CD4-positive, alpha-beta T cell (primary cell): ENCODE measurements at regions of chr7 and their contacts with region 1.

Region 1: GRCh38 chr7:85940798-85941197 is 702.9 kb upstream of the GRM3 start:
- DNase-seq: no peak
- ATAC-seq: no peak
- H3K4me3 ChIP-seq: no peak overlapping the region
- H3K4me3 Mint-ChIP-seq: no peak overlapping the region
- H3K27ac ChIP-seq: no peak overlapping the region
- H3K27ac Mint-ChIP-seq: no peak overlapping the region
- H3K4me1 ChIP-seq: no peaks in the 10 kb centered on the region
- H3K4me1 Mint-ChIP-seq: no peaks in the 10 kb centered on the region
- H3K27me3 ChIP-seq: no peaks in the 10 kb centered on the region
- H3K27me3 Mint-ChIP-seq: no peaks in the 10 kb centered on the region
- CTCF ChIP-seq: no peak

Region 2: DNA sequence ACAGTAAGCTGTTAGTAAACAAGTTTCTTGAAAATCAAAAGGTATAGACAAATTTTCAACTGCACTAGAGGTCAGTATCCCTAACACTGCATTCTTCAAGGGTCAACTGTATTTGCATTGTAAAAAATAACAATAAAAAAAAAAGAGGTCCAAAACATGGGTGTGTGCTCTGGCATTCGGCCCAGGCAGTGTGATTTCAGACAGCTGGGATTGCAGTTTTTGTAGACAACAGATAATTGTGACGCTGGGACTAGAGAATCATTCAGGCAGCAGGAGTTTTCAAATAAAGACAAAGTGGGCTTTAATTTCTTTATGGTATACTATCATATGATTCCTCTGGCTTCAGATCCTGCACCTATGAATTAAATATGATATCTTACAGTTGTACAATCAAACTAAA is 210.8 kb before region 1 on chr7:
- CTCF ChIA-PET with region 1: no interaction called
- POLR2A ChIA-PET with region 1: no interaction called
- intact Hi-C with region 1: no loop called
- DNase-seq: no peak
- ATAC-seq: no peak
- H3K4me3 ChIP-seq: no peak overlapping the region
- H3K4me3 Mint-ChIP-seq: no peak overlapping the region
- H3K27ac ChIP-seq: no peak overlapping the region
- H3K27ac Mint-ChIP-seq: no peak overlapping the region
- H3K4me1 ChIP-seq: no peaks in the 10 kb centered on the region
- H3K4me1 Mint-ChIP-seq: no peaks in the 10 kb centered on the region
- H3K27me3 ChIP-seq: no peaks in the 10 kb centered on the region
- H3K27me3 Mint-ChIP-seq: no peaks in the 10 kb centered on the region
- CTCF ChIP-seq: no peak

Region 3: GRCh38 chr7:85980740-85981139 is 39.9 kb after region 1 on chr7:
- CTCF ChIA-PET with region 1: no interaction called
- POLR2A ChIA-PET with region 1: no interaction called
- intact Hi-C with region 1: loop called in 1 of 2 experiments (anchors 5 kb)
- DNase-seq: no peak
- ATAC-seq: no peak
- H3K4me3 ChIP-seq: no peak overlapping the region
- H3K4me3 Mint-ChIP-seq: no peak overlapping the region
- H3K27ac ChIP-seq: no peak overlapping the region
- H3K27ac Mint-ChIP-seq: no peak overlapping the region
- H3K4me1 ChIP-seq: no peaks in the 10 kb centered on the region
- H3K4me1 Mint-ChIP-seq: no peaks in the 10 kb centered on the region
- H3K27me3 ChIP-seq: no peaks in the 10 kb centered on the region
- H3K27me3 Mint-ChIP-seq: no peaks in the 10 kb centered on the region
- CTCF ChIP-seq: no peak